BJ (cell line): ENCODE measurements at regions of chr10 and their contacts with region 1.

Region 1: GRCh38 chr10:59906417-59907202 is at the start of gene CCDC6:
- DNase-seq: peak; percentile 55
- H3K4me3 ChIP-seq: peak within 1 kb of the TSS; percentile 94
- H3K27me3 ChIP-seq: no peaks in the 10 kb centered on the region
- CTCF ChIP-seq: peak; percentile 75
- polyA plus RNA-seq, gene CCDC6: 17.2 and 28.4 TPM in 2 replicates

Region 2: GRCh38 chr10:59808896-59809643 is 97.5 kb before region 1 on chr10:
- CTCF ChIA-PET with region 1: interaction called, 10 read pairs
- POLR2A ChIA-PET with region 1: no interaction called
- DNase-seq: no peak
- H3K4me3 ChIP-seq: no peak overlapping the region
- H3K27me3 ChIP-seq: no peaks in the 10 kb centered on the region
- CTCF ChIP-seq: peak; percentile 62

Region 3: DNA sequence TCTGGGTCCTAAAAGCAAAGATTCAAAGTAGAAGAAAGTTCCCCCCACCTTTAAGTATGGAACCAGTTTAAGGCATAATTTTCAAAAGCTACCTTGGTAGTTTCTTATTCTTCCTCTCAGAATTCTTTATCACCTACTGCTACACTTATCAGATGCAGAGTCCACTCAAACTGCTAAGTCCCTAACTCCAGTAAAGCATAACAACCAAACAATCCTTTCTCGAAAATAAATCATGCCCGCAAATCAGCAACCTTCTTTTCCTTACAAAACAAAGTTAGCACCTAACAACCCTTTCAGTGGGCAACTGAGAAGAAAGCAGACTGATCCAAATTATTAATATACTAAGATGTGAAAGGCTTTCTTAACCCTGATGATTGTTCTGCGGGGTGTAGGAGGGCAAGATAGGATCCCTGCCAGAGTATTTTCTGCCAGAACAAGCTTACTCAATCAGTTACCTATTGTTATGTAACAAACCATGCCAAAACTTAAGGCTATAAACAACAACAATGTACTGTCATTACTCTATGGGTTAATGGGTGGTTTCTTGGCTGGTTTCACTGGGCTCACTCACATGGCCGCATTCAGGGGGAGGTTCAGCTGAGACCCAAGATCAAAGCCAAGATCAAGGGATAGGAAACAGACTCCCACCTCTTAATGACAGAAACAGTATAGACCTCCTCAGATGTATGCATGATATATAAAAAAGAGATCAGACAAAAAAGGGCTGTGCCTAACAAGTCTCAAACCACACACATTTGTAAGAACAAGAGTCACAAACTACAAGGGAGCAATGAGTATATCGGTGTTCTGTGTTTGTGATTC is 42.3 kb before region 1 on chr10:
- CTCF ChIA-PET with region 1: no interaction called
- POLR2A ChIA-PET with region 1: no interaction called
- DNase-seq: no peak
- H3K4me3 ChIP-seq: no peak overlapping the region
- H3K27me3 ChIP-seq: no peaks in the 10 kb centered on the region
- CTCF ChIP-seq: no peak

Region 4: DNA sequence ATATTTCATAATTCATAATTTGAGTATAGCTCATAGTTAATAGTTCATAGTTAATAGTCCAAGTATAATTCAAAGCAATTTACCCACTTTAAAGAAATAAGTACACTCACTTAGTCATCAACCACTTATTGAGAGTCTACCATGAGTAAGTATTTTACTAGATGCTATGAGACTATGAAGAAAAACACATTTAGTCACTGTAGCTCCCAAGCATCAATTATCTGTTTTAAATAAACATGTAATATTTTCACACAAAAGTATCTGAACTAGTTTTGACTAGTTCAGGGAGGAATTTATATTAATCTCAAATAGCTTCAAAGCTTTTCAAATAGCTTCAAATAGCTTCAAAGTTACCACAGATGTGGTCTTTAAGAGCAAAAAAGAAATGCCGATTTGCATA is 363.8 kb after region 1 on chr10:
- CTCF ChIA-PET with region 1: no interaction called
- POLR2A ChIA-PET with region 1: no interaction called
- DNase-seq: peak; percentile 19
- H3K4me3 ChIP-seq: no peak overlapping the region
- H3K27me3 ChIP-seq: no peaks in the 10 kb centered on the region
- CTCF ChIP-seq: no peak